ENCODE measurements at regions of chr10 and their contacts with region 1.

Region 1: DNA sequence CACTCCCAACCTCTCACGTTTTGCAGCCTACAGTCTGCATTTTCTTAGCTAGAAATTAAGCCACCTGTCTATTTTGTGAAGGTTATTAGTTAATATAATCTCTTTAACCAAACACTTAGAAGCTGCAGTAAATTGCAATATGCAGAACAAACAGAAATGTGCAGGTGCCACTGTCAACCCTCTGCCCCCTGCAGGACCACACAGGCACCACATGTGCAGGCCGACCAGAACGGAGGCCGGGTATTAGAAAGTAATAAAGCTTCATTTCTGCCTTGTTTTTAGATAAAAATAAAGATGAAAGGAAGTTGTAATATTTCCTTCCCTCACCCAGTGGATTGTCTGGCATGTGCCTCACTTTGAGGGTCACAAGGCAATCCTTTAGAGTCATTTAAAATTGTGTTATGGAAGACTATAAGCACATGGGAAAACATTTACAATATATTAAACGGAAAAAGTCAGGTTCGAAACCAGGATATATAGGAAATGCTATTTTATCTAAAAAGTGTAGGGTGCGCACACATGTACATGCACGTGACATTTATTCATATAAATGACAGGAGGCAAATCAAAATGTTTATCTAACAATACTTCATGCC is 158.2 kb downstream of the ARHGAP12 start:
- DNase-seq: peak in 33 of 35 experiments; percentile 25 to 71 (median 50)
- ATAC-seq: peak; percentile 73 to 91 (median 85)
- H3K4me3 ChIP-seq: no peak overlapping the region
- H3K4me3 Mint-ChIP-seq: no peak overlapping the region
- H3K27ac ChIP-seq: no peak overlapping the region
- H3K27ac Mint-ChIP-seq: no peak overlapping the region
- H3K4me1 ChIP-seq: no peaks in the 10 kb centered on the region
- H3K4me1 Mint-ChIP-seq: peaks cover 0 to 6% (median 1%) of the 10 kb centered on the region in 3 donors
- H3K27me3 ChIP-seq: peaks cover 0 to 6% of the 10 kb centered on the region in 2 experiments
- H3K27me3 Mint-ChIP-seq: no peaks in the 10 kb centered on the region

Region 2: GRCh38 chr10:31083765-31084184 is 686.6 kb before region 1 on chr10:
- CTCF ChIA-PET with region 1: interaction called in 1 of 2 experiments, 10 read pairs
- POLR2A ChIA-PET with region 1: no interaction called
- DNase-seq: peak in 34 of 35 experiments; percentile 5 to 74 (median 34)
- ATAC-seq: peak in 3 of 4 experiments; percentile 50 to 70 (median 69)
- H3K4me3 ChIP-seq: no peak overlapping the region
- H3K4me3 Mint-ChIP-seq: no peak overlapping the region
- H3K27ac ChIP-seq: no peak overlapping the region
- H3K27ac Mint-ChIP-seq: no peak overlapping the region
- H3K4me1 ChIP-seq: peaks cover 0 to 6% of the 10 kb centered on the region in 2 experiments
- H3K4me1 Mint-ChIP-seq: peaks cover 0 to 5% (median 0%) of the 10 kb centered on the region in 3 donors
- H3K27me3 ChIP-seq: no peaks in the 10 kb centered on the region
- H3K27me3 Mint-ChIP-seq: no peaks in the 10 kb centered on the region